HCT116 (cell line): ENCODE measurements at regions of chrX and their contacts with region 1.

Region 1: GRCh38 chrX:9785944-9786797 is at the start of gene SHROOM2:
- DNase-seq: no peak
- ATAC-seq: peak; percentile 74
- H3K4me3 ChIP-seq: peak within 1 kb of the TSS; percentile 48 to 60
- H3K27ac ChIP-seq: peak within 1 kb of the TSS; percentile 63; the same call in 1 of the 2 replicates
- H3K4me1 ChIP-seq: peaks cover 0 to 21% of the 10 kb centered on the region in 2 experiments; a peak in 2 of 4 replicates
- H3K27me3 ChIP-seq: no peaks in the 10 kb centered on the region
- CTCF ChIP-seq: no peak
- POLR2A ChIP-seq: no peak
- RAD21 ChIP-seq: no peak
- total RNA-seq, gene SHROOM2: 5.3 TPM

Region 2: GRCh38 chrX:9586992-9587392 is 199.2 kb before region 1 on chrX:
- CTCF ChIA-PET with region 1: no interaction called
- POLR2A ChIA-PET with region 1: no interaction called
- RAD21 ChIA-PET with region 1: no interaction called
- intact Hi-C with region 1: no loop called
- DNase-seq: no peak
- ATAC-seq: no peak
- H3K4me3 ChIP-seq: no peak overlapping the region
- H3K27ac ChIP-seq: no peak overlapping the region
- H3K4me1 ChIP-seq: no peaks in the 10 kb centered on the region
- H3K27me3 ChIP-seq: no peaks in the 10 kb centered on the region
- CTCF ChIP-seq: no peak
- POLR2A ChIP-seq: no peak
- RAD21 ChIP-seq: no peak

Region 3: DNA sequence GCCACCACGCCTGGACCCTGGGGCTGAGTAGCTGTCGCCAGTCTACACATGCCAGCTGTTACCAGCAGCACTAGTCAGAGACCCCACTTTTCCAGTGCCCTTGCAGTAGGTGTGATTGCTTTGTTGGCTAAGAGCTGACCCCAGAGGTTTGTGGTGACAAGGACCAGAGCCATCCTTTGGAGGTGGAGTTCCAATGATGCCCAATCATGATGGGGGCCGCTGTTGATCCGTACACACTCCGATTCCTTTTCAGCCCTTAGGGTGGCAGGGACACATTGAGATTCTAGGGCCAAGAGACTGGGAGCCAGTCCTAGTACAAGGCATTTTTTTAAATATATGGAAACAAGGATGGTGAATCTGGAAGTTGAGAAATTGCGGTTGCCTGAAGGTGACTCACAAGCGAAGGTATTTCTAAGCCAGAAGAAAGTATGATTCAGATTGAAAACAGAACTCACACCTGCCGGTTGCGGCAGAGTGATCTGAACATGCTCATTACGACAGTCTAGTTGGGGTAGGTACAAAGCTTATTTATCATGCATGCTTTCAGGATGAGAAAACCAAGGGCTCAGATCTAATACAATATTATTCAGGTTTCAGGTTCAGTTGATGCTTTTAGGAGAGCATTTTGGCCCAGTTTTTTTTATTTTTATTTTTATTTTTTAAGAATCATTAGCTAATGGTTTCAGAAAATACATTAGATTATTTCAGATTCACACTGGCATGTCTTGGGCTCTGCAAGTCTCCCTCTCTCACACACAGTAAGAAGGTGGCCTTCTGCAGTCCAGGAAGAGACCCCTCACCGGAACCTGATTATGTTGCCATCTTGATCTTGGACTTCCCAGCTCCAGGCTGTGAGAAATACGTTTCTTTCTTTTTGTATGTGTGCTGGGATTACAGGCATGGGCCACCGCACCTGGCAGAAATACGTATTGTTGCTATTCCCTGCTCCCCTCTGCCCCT is 43.4 kb after region 1 on chrX:
- CTCF ChIA-PET with region 1: no interaction called
- POLR2A ChIA-PET with region 1: no interaction called
- RAD21 ChIA-PET with region 1: no interaction called
- intact Hi-C with region 1: loop called (anchors 5 kb)
- DNase-seq: peak; percentile 65
- ATAC-seq: peak; percentile 90
- H3K4me3 ChIP-seq: 0 out of 4 replicates have a peak overlapping the region, but pooled peaks of 1 of the 2 experiments have one; percentile 18
- H3K27ac ChIP-seq: peak overlapping the region; percentile 45; the same call in 1 of the 2 replicates
- H3K4me1 ChIP-seq: peaks cover 10 to 20% of the 10 kb centered on the region in 2 experiments
- H3K27me3 ChIP-seq: no peaks in the 10 kb centered on the region
- CTCF ChIP-seq: 0 out of 6 replicates have a peak, but pooled peaks of 2 of the 3 experiments have one; percentile 7 to 28
- POLR2A ChIP-seq: no peak
- RAD21 ChIP-seq: peak; percentile 44

Region 4: DNA sequence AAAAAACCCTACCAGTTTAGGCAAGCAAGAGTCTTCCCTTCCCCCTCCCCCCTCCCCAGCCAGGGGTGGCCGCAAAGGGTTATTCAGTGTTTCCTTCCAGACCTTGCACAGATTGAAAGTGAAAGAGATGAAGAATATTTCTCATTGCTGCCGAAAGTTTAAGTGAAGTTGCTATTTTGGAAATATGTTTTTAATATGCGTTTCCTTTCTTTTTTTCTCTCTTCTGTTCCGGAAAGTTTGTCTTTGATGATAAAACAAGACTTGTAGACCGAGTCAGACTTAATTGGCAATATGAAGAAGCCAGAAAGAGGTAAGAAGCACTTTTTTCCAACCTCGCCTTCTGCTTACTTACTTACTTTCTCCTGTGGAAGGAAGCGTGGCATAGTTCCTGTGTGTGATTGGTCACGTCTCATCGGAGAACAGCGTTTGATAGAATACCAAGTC is 312.1 kb after region 1 on chrX:
- CTCF ChIA-PET with region 1: no interaction called
- POLR2A ChIA-PET with region 1: no interaction called
- RAD21 ChIA-PET with region 1: no interaction called
- intact Hi-C with region 1: no loop called
- DNase-seq: no peak
- ATAC-seq: no peak
- H3K4me3 ChIP-seq: no peak overlapping the region
- H3K27ac ChIP-seq: no peak overlapping the region
- H3K4me1 ChIP-seq: no peaks in the 10 kb centered on the region
- H3K27me3 ChIP-seq: no peaks in the 10 kb centered on the region
- CTCF ChIP-seq: no peak
- POLR2A ChIP-seq: no peak
- RAD21 ChIP-seq: no peak

Region 5: GRCh38 chrX:10444205-10444604 is 658.0 kb after region 1 on chrX:
- CTCF ChIA-PET with region 1: no interaction called
- POLR2A ChIA-PET with region 1: no interaction called
- RAD21 ChIA-PET with region 1: no interaction called
- intact Hi-C with region 1: no loop called
- DNase-seq: no peak
- ATAC-seq: no peak; the same call in 1 of the 2 replicates
- H3K4me3 ChIP-seq: no peak overlapping the region
- H3K27ac ChIP-seq: no peak overlapping the region
- H3K4me1 ChIP-seq: peaks cover 0 to 11% of the 10 kb centered on the region in 2 experiments; a peak in 2 of 4 replicates
- H3K27me3 ChIP-seq: no peaks in the 10 kb centered on the region
- CTCF ChIP-seq: 0 out of 6 replicates have a peak, but pooled peaks of 2 of the 3 experiments have one; percentile 5 to 9
- POLR2A ChIP-seq: no peak
- RAD21 ChIP-seq: peak; percentile 42